Posterior vena cava (tissue), 2 donors: ENCODE measurements at regions of chr1 and their contacts with region 1.

Region 1: GRCh38 chr1:2194898-2195673 is 514 bp upstream of the FAAP20 start:
- DNase-seq: peak; percentile 97

Region 2: DNA sequence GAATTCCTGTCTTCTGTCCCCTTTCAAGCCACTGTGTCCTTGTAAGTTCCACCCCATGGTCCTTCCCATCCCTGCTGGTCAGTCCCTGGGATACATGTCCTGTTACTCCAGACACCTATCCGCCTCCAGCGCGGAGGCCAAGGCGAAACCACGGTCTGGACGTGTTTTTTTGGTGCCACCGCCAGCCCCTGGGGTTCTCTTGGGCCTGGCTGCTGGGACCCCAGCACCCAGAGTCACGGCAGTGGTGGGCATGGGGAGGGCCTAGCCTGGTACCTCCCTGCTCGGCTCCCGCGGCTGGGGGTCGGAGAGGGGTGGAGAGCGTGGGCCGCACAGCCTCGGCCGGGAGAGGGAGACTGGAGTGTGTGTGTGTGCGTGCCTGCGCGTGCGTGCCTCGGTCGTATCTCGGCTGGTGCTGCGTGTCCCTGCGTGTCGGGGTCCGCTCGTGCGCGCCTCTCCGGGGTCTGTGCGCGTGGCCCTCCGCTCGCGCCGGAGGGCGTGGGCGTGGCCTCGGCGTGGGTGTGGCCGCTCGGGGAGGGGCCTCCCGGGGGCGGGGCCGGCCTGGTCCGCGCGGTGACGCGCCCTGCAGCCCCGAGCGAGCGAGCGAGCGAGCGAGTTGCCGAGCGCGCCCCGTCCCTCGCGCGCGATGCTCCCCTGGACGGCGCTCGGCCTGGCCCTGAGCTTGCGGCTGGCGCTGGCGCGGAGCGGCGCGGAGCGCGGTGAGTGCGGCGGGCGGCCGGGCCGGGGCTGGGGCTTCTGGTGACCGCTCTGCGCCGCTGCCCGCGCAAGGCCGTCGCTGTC is 759.8 kb before region 1 on chr1 and contains the start of gene VWA1:
- intact Hi-C with region 1: no loop called
- DNase-seq: peak; percentile 89
- total RNA-seq, gene VWA1: 59.8 to 67.7 TPM

Region 3: GRCh38 chr1:2381741-2382620 is 186.9 kb after region 1 on chr1:
- intact Hi-C with region 1: loop called (anchors 2 kb)
- DNase-seq: peak; percentile 95